Adrenal gland (tissue), 19 donors: ENCODE measurements at regions of chr10 and their contacts with region 1.

Region 1: GRCh38 chr10:47384148-47384921 is at the start of gene ZNF488:
- DNase-seq: peak; percentile 77 to 88 (median 84)
- H3K4me3 ChIP-seq: peak within 1 kb of the TSS in 3 of 4 donors; percentile 51 to 99 (median 60)
- H3K27ac ChIP-seq: peak within 1 kb of the TSS in 4 of 5 donors; percentile 38 to 92 (median 76)
- H3K4me1 ChIP-seq: peaks cover 0 to 10% of the 10 kb centered on the region in 2 donors
- H3K27me3 ChIP-seq: no peaks in the 10 kb centered on the region
- CTCF ChIP-seq: peak in 1 of 6 experiments; percentile 13
- POLR2A ChIP-seq: peak; percentile 30 to 60
- total RNA-seq, gene ZNF488: 0.06 to 0.20 (median 0.13) TPM in 6 of 9 donors, not detected in the others

Region 2: GRCh38 chr10:46284293-46285229 is 1099.8 kb before region 1 on chr10:
- intact Hi-C with region 1: loop called (anchors 5 kb)
- DNase-seq: peak; percentile 71 to 87 (median 83)
- H3K4me3 ChIP-seq: peak overlapping the region in 3 of 4 donors; percentile 33 to 84 (median 42)
- H3K27ac ChIP-seq: peak overlapping the region in 3 of 5 donors; percentile 33 to 74 (median 70)
- H3K4me1 ChIP-seq: peaks cover 10 to 14% of the 10 kb centered on the region in 2 donors
- H3K27me3 ChIP-seq: no peaks in the 10 kb centered on the region
- CTCF ChIP-seq: no peak
- POLR2A ChIP-seq: peak in 1 of 2 donors; percentile 35